ENCODE measurements at regions of chr13 and their contacts with region 1.

Region 1: GRCh38 chr13:22278336-22278929 is 607.6 kb downstream of the FGF9 start:
- DNase-seq: peak; percentile 41 to 80
- ATAC-seq: peak; percentile 40 to 73 (median 49)
- H3K4me3 ChIP-seq: no peak overlapping the region
- H3K4me3 Mint-ChIP-seq: no peak overlapping the region
- H3K27ac ChIP-seq: no peak overlapping the region
- H3K27ac Mint-ChIP-seq: no peak overlapping the region
- H3K4me1 ChIP-seq: no peaks in the 10 kb centered on the region
- H3K4me1 Mint-ChIP-seq: no peaks in the 10 kb centered on the region
- H3K27me3 ChIP-seq: no peaks in the 10 kb centered on the region
- H3K27me3 Mint-ChIP-seq: peaks cover 0 to 9% of the 10 kb centered on the region in 2 donors
- CTCF ChIP-seq: peak; percentile 58

Region 2: GRCh38 chr13:21638319-21639282 is 639.8 kb before region 1 on chr13:
- intact Hi-C with region 1: loop called (anchors 1 kb)
- DNase-seq: peak in 1 of 2 donors; percentile 68
- ATAC-seq: peak; percentile 36 to 66 (median 49)
- H3K4me3 ChIP-seq: no peak overlapping the region
- H3K4me3 Mint-ChIP-seq: no peak overlapping the region
- H3K27ac ChIP-seq: no peak overlapping the region
- H3K27ac Mint-ChIP-seq: no peak overlapping the region
- H3K4me1 ChIP-seq: no peaks in the 10 kb centered on the region
- H3K4me1 Mint-ChIP-seq: peaks cover 0 to 9% of the 10 kb centered on the region in 2 donors
- H3K27me3 ChIP-seq: no peaks in the 10 kb centered on the region
- H3K27me3 Mint-ChIP-seq: peaks cover 5 to 27% of the 10 kb centered on the region in 2 donors
- CTCF ChIP-seq: peak; percentile 92

Region 3: GRCh38 chr13:21849323-21849722 is 429.1 kb before region 1 on chr13:
- intact Hi-C with region 1: loop called (anchors 1 kb)
- DNase-seq: peak in 1 of 2 donors; percentile 67
- ATAC-seq: peak in 1 of 3 donors; percentile 72
- H3K4me3 ChIP-seq: no peak overlapping the region
- H3K4me3 Mint-ChIP-seq: no peak overlapping the region
- H3K27ac ChIP-seq: no peak overlapping the region
- H3K27ac Mint-ChIP-seq: no peak overlapping the region
- H3K4me1 ChIP-seq: no peaks in the 10 kb centered on the region
- H3K4me1 Mint-ChIP-seq: no peaks in the 10 kb centered on the region
- H3K27me3 ChIP-seq: no peaks in the 10 kb centered on the region
- H3K27me3 Mint-ChIP-seq: peaks cover 0 to 3% of the 10 kb centered on the region in 2 donors
- CTCF ChIP-seq: peak; percentile 54

Measured in natural killer cell (primary cell).